ENCODE measurements at regions of chr10 and their contacts with region 1.

Region 1: GRCh38 chr10:43683451-43684291 is 35.0 kb upstream of the ZNF32 start:
- DNase-seq: no peak
- H3K4me3 ChIP-seq: no peak overlapping the region
- H3K27ac ChIP-seq: no peak overlapping the region
- H3K4me1 ChIP-seq: peaks cover 11% of the 10 kb centered on the region
- H3K27me3 ChIP-seq: no peaks in the 10 kb centered on the region
- CTCF ChIP-seq: no peak
- POLR2A ChIP-seq: no peak

Region 2: DNA sequence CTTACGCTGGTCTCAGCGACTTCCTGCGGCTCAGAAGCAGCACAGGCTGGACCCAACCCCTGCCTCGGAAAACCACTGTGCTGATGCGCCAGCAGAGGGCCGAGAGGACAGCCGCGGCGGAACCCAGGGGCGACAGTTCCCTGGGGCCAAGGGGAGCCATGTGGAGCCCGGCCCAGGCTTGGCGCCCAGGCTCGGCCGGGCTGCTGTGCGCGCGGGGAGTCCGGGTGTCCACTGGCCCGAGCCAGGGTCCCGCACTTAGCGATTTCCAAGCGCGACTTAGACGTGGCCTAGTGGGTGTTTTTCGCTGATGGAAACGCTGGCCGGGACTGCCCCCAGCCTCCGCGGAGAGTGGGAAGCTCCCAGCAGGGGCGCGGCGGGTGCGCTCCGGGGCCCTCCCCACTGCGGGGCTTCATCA is 16.3 kb before region 1 on chr10:
- intact Hi-C with region 1: no loop called
- DNase-seq: no peak
- H3K4me3 ChIP-seq: peak overlapping the region; percentile 27 to 43
- H3K27ac ChIP-seq: peak overlapping the region; percentile 2
- H3K4me1 ChIP-seq: peaks cover 10% of the 10 kb centered on the region
- H3K27me3 ChIP-seq: no peaks in the 10 kb centered on the region
- CTCF ChIP-seq: no peak
- POLR2A ChIP-seq: no peak

Region 3: GRCh38 chr10:43801133-43801532 is 117.5 kb after region 1 on chr10:
- intact Hi-C with region 1: no loop called
- DNase-seq: no peak
- H3K4me3 ChIP-seq: no peak overlapping the region
- H3K27ac ChIP-seq: peak overlapping the region; percentile 6
- H3K4me1 ChIP-seq: peaks cover 7% of the 10 kb centered on the region
- H3K27me3 ChIP-seq: no peaks in the 10 kb centered on the region
- CTCF ChIP-seq: no peak
- POLR2A ChIP-seq: no peak

Region 4: GRCh38 chr10:44310762-44311562 is 627.3 kb after region 1 on chr10:
- intact Hi-C with region 1: loop called (anchors 5 kb)
- DNase-seq: peak; percentile 91 to 96
- H3K4me3 ChIP-seq: peak overlapping the region; percentile 21 to 39
- H3K27ac ChIP-seq: peak overlapping the region; percentile 82
- H3K4me1 ChIP-seq: peaks cover 31% of the 10 kb centered on the region
- H3K27me3 ChIP-seq: no peaks in the 10 kb centered on the region
- CTCF ChIP-seq: peak; percentile 70 to 91 (median 77)
- POLR2A ChIP-seq: no peak

Region 5: DNA sequence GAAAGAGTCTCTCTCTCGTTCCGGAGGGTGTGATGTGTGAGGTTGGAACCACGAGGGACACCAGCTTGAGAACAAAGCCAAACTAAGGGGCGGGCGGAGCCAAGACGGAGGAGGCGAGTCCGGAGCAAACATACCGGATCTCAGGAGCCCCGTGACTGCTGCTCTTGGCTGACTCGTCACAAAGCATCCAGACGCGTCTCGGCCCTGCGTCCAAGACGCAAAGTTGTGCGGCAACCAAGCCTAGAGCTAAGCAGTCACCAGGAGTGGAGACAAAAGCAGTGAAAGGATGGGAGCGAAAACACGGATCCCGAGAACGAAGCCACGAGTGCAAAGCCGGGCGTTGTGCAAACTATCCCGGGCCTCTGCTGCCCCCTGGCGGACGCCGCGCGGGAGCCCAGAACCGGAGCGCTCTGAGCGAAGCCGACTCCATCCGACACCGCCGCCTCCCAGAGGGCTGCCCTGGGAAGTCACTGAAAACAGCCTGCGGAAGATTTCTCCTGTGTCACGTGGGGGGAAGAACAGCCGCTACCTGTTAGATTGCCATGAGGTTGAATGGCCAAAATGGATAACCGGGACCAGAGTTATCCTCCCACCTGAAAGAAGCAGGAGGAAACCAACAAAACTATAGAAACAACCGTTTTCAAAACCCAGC is 1181.1 kb after region 1 on chr10:
- intact Hi-C with region 1: loop called (anchors 5 kb)
- DNase-seq: peak in 1 of 2 donors; percentile 91
- H3K4me3 ChIP-seq: peak overlapping the region; percentile 48 to 57
- H3K27ac ChIP-seq: peak overlapping the region; percentile 74
- H3K4me1 ChIP-seq: peaks cover 27% of the 10 kb centered on the region
- H3K27me3 ChIP-seq: no peaks in the 10 kb centered on the region
- CTCF ChIP-seq: peak; percentile 93 to 97 (median 95)
- POLR2A ChIP-seq: no peak

Measured in vagina (tissue), 2 donors.